Endothelial cell of umbilical vein (primary cell): ENCODE measurements at regions of chr15 and their contacts with region 1.

Region 1: DNA sequence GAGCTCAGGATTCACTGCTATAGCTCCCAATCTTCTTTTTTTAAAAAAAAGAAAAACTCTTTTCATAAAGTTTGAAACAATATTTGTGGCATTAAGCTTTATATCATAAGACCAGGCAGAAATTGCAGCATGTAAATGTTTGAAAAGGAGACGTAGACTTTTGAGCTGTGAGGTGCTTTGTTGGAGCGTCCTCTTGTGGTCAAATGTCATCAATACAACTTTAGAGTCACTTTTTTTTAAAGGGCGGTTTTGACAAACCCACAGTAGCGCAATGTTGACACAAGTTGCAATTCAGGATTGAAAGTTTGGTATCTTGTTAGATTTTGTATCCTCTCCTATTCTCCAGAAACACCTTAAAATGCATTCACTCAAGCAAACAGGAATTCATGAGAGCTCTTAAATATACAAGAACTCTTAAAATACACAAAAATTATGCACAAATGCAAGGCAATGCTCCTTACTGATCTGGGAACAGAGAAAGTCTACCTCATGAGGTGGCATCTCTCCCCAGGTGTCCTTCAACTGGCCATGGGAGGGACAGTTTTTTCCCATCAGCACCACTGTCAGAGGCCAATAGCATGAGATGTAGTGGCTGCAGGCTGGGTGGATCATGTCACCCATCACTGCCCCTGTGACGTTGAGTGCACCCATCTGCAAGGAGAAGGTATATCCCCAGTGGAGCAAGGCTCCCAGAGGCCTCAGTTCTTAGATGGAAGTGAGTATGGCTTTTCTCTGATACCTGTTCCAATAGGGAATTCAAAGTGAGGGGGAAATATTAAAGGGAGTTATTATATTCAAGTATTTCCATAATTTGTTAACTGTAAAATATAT is 70.7 kb downstream of the ANXA2 start:
- DNase-seq: peak; percentile 74
- H3K4me3 ChIP-seq: no peak overlapping the region
- H3K27ac ChIP-seq: no peak overlapping the region
- H3K4me1 ChIP-seq: no peaks in the 10 kb centered on the region
- H3K27me3 ChIP-seq: peaks cover 30 to 54% of the 10 kb centered on the region in 2 experiments
- CTCF ChIP-seq: peak; percentile 64 to 75
- POLR2A ChIP-seq: no peak

Region 2: GRCh38 chr15:59725172-59725486 is 601.9 kb before region 1 on chr15:
- CTCF ChIA-PET with region 1: interaction called, 145 read pairs
- POLR2A ChIA-PET with region 1: no interaction called
- dilution Hi-C with region 1: no loop called
- intact Hi-C with region 1: loop called (anchors 1 kb)
- DNase-seq: no peak
- H3K4me3 ChIP-seq: no peak overlapping the region
- H3K27ac ChIP-seq: no peak overlapping the region
- H3K4me1 ChIP-seq: no peaks in the 10 kb centered on the region
- H3K27me3 ChIP-seq: peaks cover 11 to 24% of the 10 kb centered on the region in 2 experiments
- CTCF ChIP-seq: no peak
- POLR2A ChIP-seq: no peak

Region 3: DNA sequence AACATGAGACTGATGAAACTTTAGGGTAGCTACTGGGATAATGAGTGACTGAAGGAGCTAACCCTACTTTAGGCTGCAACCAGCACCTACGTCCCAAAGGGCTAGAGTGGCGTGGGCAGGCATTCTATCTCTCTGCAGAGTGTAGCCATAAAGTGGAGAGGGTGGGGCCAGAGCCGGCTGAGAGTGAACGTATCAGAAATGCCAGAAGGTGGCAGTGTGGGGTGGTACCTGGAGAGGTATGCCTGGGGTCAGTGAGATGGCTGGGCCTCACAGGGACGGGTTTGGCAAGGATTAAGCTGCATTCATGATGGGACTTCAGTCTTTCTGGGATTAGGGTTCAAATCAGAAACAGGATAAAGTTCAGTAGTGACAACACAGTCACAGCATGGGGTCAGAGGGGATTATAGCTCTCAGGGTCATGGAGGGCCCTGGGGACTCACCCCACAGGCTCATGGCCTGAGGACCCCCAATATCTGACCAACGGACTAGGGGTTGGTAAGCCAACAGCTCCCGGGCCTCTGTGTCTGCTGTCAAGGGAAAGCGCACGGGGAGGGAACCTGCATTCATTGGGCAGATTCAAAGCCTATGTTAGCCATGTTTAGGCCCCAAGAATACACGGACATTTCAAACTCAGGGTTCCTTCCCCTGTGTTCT is 409.4 kb before region 1 on chr15:
- CTCF ChIA-PET with region 1: interaction called, 41 read pairs
- POLR2A ChIA-PET with region 1: no interaction called
- dilution Hi-C with region 1: no loop called
- intact Hi-C with region 1: loop called (anchors 1 kb)
- DNase-seq: peak; percentile 44
- H3K4me3 ChIP-seq: no peak overlapping the region
- H3K27ac ChIP-seq: no peak overlapping the region
- H3K4me1 ChIP-seq: no peaks in the 10 kb centered on the region
- H3K27me3 ChIP-seq: peaks cover 4 to 7% of the 10 kb centered on the region in 2 experiments
- CTCF ChIP-seq: peak; percentile 44 to 57
- POLR2A ChIP-seq: no peak

Region 4: DNA sequence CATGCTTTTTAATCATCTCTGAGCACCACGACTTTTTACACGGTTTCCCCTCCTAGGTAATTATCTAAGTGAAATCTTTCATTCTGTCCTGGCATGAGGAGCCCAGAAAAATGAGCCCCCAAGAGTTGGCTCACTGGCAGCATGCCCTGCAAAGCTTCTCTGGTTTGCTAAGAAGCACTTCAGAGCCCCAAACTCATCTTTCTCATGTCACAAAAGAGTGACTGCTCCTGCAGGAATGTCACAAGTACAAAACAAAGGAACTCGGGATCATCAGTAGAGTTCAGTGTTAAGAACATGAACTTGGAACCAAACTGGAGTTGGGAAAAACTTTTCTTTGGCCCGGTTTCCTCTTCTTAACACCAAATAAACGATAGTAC is 199.1 kb before region 1 on chr15:
- CTCF ChIA-PET with region 1: interaction called, 5 read pairs
- POLR2A ChIA-PET with region 1: no interaction called
- dilution Hi-C with region 1: no loop called
- intact Hi-C with region 1: loop called (anchors 10 kb)
- DNase-seq: no peak
- H3K4me3 ChIP-seq: peak overlapping the region; percentile 38 to 92 (median 91)
- H3K27ac ChIP-seq: peak overlapping the region; percentile 16
- H3K4me1 ChIP-seq: peaks cover 5% of the 10 kb centered on the region
- H3K27me3 ChIP-seq: peaks cover 14 to 20% of the 10 kb centered on the region in 2 experiments
- CTCF ChIP-seq: no peak
- POLR2A ChIP-seq: no peak

Region 5: DNA sequence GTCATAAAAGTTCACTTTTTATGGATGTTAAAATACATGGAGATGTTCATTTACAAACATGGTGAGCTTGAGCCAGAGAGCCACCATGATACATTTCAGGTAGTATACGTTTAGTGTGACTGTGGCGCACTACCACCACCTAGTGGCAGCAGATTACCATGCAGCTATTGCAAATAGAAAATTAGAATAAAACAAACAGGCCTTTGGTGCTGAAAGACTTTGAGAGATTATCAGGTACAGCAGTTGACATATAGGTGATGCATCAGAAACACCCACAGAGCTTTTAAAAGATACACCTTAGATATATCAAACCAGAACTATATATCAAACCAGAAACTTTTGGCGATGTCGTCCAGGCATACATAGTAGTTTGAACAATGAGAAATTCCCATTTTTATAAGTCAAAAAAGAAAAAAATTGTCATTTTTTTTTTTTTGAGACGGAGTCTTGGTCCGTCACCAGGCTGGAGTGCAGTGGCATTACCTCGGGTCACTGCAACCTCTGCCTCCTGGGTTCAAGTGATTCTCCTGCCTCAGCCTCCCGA is 193.9 kb after region 1 on chr15:
- CTCF ChIA-PET with region 1: interaction called, 57 read pairs
- POLR2A ChIA-PET with region 1: no interaction called
- dilution Hi-C with region 1: no loop called
- intact Hi-C with region 1: loop called (anchors 1 kb)
- DNase-seq: peak; percentile 78
- H3K4me3 ChIP-seq: no peak overlapping the region
- H3K27ac ChIP-seq: no peak overlapping the region
- H3K4me1 ChIP-seq: peaks cover 18% of the 10 kb centered on the region
- H3K27me3 ChIP-seq: no peaks in the 10 kb centered on the region
- CTCF ChIP-seq: peak; percentile 75 to 76
- POLR2A ChIP-seq: no peak